ENCODE measurements at regions of chr1 and their contacts with region 1.

Region 1: GRCh38 chr1:198929961-198930599 is 291.2 kb downstream of the PTPRC start:
- DNase-seq: no peak
- H3K4me3 Mint-ChIP-seq: peak overlapping the region; percentile 86
- H3K27ac Mint-ChIP-seq: peak overlapping the region; percentile 93
- H3K4me1 Mint-ChIP-seq: peaks cover 66% of the 10 kb centered on the region
- H3K27me3 Mint-ChIP-seq: no peaks in the 10 kb centered on the region

Region 2: DNA sequence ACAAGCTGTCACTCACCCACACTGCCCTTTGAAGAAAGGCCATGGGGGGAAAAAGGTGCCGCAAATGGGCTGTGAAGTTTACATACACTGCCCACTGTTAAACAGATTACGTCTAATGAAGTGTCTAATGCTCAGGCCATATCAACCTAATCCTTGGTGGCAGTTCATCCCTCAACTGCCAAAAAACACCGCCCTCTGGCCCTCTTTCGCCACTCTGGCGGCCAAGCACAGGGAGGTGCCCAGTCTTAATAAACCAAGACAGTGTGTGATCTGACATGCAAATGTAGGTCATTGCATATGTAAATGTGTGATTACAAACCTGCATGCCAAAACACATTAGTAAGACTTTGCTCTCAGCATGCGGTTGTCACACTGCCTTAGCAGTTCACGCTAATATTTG is 683.7 kb before region 1 on chr1:
- intact Hi-C with region 1: no loop called
- DNase-seq: no peak
- H3K4me3 Mint-ChIP-seq: no peak overlapping the region
- H3K27ac Mint-ChIP-seq: no peak overlapping the region
- H3K4me1 Mint-ChIP-seq: peaks cover 10% of the 10 kb centered on the region
- H3K27me3 Mint-ChIP-seq: no peaks in the 10 kb centered on the region

Region 3: DNA sequence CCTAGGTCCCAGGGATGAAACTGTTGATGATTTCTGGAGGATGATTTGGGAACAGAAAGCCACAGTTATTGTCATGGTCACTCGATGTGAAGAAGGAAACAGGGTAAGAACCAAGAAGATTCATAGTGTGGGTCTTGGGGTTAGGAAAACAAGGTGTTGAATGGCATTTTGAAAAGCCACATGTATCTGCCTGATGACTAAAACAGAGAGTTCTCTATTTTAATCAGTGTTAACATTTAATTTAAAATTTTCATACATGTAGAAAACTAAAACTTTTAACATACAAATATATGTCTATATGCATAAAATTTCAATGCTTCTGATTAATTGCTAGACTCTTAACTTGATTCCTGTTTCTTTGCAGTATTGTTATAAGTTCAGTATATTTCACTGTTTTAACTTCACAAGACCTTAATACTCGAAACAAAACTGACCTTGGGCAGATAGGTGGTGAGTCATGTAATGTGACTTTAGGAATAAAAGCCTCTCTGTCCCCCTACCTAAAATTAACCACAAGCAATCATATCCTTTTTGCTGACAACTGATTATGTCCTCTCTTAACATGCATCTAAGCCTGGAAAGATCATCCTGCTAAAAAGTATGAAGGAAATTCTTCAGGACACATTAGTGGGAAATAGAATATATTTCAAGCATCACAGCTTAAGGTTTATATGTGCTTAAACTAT is 195.6 kb before region 1 on chr1:
- intact Hi-C with region 1: loop called (anchors 10 kb)
- DNase-seq: no peak
- H3K4me3 Mint-ChIP-seq: no peak overlapping the region
- H3K27ac Mint-ChIP-seq: peak overlapping the region; percentile 73
- H3K4me1 Mint-ChIP-seq: peaks cover 79% of the 10 kb centered on the region
- H3K27me3 Mint-ChIP-seq: no peaks in the 10 kb centered on the region